A673 (cell line): ENCODE measurements at regions of chr2 and their contacts with region 1.

Region 1: DNA sequence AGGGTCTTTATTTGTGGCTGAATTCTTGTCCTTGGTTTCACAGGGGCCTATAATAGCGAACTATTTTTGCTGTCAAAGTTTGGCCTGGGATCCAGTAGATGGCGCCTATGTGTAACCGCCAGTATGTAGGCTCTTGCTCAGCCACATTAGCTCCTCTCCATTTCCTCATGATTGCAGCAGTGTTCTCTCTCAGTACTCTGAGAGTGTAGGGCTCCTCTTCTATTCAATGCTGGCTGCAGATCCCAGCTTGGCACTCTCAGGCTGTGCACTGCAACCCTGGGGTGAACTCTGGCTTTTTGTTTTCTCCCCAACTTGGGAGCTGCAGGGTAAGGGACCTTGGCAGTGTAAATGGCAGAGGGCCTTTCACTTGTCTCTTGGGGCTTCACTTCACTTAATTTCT is 344.6 kb upstream of the CHAC2 start:
- DNase-seq: peak; percentile 73
- H3K4me3 ChIP-seq: no peak overlapping the region
- H3K27ac ChIP-seq: no peak overlapping the region
- H3K4me1 ChIP-seq: no peaks in the 10 kb centered on the region
- H3K27me3 ChIP-seq: peaks cover 6% of the 10 kb centered on the region
- CTCF ChIP-seq: peak; percentile 78

Region 2: DNA sequence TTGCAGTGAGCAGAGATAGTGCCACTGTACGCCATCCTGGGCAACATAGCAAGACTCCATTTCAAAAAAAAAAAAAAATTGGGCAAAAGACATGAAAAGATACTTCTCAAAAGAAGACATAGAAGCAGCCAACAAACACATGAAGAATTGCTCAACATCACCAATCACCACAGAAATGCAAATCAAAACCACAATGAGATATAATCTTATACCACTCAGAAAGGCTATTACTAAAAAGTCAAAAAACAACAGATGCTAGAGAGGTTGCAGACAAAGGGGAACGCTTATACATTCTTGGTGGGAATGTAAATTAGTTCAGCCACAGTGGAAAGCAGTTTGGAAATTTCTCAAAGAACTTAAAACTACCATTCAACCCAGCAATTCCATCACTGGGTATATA is 301.6 kb after region 1 on chr2:
- CTCF ChIA-PET with region 1: no interaction called
- POLR2A ChIA-PET with region 1: no interaction called
- intact Hi-C with region 1: no loop called
- DNase-seq: peak; percentile 1
- H3K4me3 ChIP-seq: no peak overlapping the region
- H3K27ac ChIP-seq: no peak overlapping the region
- H3K4me1 ChIP-seq: no peaks in the 10 kb centered on the region
- H3K27me3 ChIP-seq: no peaks in the 10 kb centered on the region
- CTCF ChIP-seq: no peak

Region 3: GRCh38 chr2:53739032-53739431 is 316.1 kb after region 1 on chr2:
- CTCF ChIA-PET with region 1: interaction called, 4 read pairs
- POLR2A ChIA-PET with region 1: no interaction called
- intact Hi-C with region 1: loop called (anchors 1 kb)
- DNase-seq: no peak
- H3K4me3 ChIP-seq: no peak overlapping the region
- H3K27ac ChIP-seq: no peak overlapping the region
- H3K4me1 ChIP-seq: no peaks in the 10 kb centered on the region
- H3K27me3 ChIP-seq: no peaks in the 10 kb centered on the region
- CTCF ChIP-seq: no peak

Region 4: DNA sequence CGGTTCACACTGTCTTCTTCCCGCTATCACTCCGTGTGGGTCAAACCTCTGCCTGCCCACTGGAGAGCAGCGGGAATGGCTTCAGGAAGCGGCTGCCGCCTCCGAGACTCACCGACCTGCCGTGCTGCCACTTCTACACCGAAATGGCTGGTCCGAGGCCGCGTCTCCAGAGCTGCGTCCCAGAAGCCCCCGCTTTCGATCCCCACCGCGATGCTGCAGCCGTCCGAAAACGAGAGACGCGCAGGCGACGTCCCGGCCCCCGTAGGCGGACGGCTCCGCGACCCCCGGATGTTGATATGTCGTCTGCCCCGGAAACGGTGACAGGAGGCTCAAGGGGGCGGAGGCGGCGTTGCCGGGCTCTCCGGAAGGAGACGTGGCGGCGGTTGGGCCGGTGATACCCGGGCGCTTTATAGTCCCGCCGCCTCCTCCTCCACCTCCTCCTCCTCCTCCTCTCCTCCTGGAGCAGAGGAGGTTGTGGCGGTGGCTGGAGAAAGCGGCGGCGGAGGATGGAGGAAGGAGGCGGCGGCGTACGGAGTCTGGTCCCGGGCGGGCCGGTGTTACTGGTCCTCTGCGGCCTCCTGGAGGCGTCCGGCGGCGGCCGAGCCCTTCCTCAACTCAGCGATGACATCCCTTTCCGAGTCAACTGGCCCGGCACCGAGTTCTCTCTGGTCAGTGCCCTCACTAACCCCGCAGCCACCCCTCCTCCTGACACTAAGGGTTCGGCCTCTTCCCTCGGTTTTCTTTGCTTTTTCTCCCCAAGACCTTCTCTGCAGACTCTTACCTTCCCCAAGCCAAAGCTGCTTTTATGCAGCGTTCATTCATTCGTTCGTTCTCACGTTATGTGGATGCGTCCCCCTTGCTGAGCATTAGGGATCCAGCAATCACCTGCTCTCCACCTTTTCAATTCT is 364.0 kb after region 1 on chr2 and contains the starts of genes ASB3 and ERLEC1:
- CTCF ChIA-PET with region 1: no interaction called
- POLR2A ChIA-PET with region 1: no interaction called
- intact Hi-C with region 1: no loop called
- DNase-seq: peak; percentile 96
- H3K4me3 ChIP-seq: peak within 1 kb of the TSS; percentile 73
- H3K27ac ChIP-seq: peak within 1 kb of the TSS; percentile 90
- H3K4me1 ChIP-seq: peaks cover 10% of the 10 kb centered on the region
- H3K27me3 ChIP-seq: no peaks in the 10 kb centered on the region
- CTCF ChIP-seq: no peak
- total RNA-seq, gene ASB3: 18.7 and 20.3 TPM in 2 replicates
- total RNA-seq, gene ERLEC1: 25.7 and 27.7 TPM in 2 replicates

Region 5: GRCh38 chr2:53826587-53827397 is 403.8 kb after region 1 on chr2:
- CTCF ChIA-PET with region 1: no interaction called
- POLR2A ChIA-PET with region 1: no interaction called
- intact Hi-C with region 1: loop called (anchors 10 kb)
- DNase-seq: no peak
- H3K4me3 ChIP-seq: no peak overlapping the region
- H3K27ac ChIP-seq: no peak overlapping the region
- H3K4me1 ChIP-seq: no peaks in the 10 kb centered on the region
- H3K27me3 ChIP-seq: no peaks in the 10 kb centered on the region
- CTCF ChIP-seq: no peak

Region 6: GRCh38 chr2:53994818-53995808 is 572.1 kb after region 1 on chr2:
- CTCF ChIA-PET with region 1: no interaction called
- POLR2A ChIA-PET with region 1: no interaction called
- intact Hi-C with region 1: no loop called
- DNase-seq: no peak
- H3K4me3 ChIP-seq: no peak overlapping the region
- H3K27ac ChIP-seq: no peak overlapping the region
- H3K4me1 ChIP-seq: peaks cover 24% of the 10 kb centered on the region
- H3K27me3 ChIP-seq: no peaks in the 10 kb centered on the region
- CTCF ChIP-seq: no peak

Region 7: DNA sequence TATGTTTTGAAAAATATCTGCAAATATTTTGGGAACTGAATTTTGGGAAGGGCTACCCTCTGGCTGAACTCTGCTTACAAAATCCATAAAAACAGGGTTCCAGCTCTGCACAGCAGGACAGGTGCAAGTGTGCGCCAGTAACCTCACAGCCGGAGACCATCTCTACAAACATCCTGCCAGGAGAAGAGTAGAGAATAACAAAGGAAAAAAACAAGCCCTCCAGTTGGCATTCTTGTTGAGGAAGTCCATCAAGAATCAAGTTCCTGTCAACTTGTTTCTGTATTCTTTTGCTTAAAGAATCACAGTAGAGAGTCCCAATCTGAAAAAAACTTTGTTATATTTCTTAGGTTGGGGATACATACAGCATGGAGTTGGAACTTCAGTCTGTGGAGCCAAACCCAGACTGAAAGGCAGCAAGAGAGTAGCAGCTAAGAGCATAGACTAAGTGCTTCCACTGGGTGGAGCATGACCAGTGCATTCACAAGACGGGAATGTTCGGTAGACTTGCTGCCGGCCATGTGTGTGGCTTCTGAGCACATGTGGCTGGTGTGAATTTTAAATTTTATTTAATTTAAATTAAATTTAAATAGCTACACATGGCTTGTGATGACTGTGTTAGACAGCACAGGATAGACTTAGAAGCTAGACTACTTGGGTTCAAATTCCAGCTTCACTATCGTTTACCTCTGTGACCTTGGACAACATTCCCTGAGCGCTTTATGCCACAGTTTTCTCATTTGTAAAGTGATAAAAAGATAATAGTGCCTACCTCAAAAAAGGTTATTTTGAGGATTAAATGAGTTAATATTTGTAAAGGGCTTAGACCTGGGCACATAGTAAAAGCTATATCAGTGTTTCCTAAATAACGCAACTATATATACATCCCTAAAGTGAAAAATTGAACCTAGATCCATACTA is 1075.0 kb after region 1 on chr2:
- CTCF ChIA-PET with region 1: no interaction called
- POLR2A ChIA-PET with region 1: no interaction called
- intact Hi-C with region 1: no loop called
- DNase-seq: peak; percentile 71
- H3K4me3 ChIP-seq: no peak overlapping the region
- H3K27ac ChIP-seq: no peak overlapping the region
- H3K4me1 ChIP-seq: peaks cover 48% of the 10 kb centered on the region
- H3K27me3 ChIP-seq: no peaks in the 10 kb centered on the region
- CTCF ChIP-seq: peak; percentile 57